PC-9 (cell line): ENCODE measurements at regions of chr12 and their contacts with region 1.

Region 1: DNA sequence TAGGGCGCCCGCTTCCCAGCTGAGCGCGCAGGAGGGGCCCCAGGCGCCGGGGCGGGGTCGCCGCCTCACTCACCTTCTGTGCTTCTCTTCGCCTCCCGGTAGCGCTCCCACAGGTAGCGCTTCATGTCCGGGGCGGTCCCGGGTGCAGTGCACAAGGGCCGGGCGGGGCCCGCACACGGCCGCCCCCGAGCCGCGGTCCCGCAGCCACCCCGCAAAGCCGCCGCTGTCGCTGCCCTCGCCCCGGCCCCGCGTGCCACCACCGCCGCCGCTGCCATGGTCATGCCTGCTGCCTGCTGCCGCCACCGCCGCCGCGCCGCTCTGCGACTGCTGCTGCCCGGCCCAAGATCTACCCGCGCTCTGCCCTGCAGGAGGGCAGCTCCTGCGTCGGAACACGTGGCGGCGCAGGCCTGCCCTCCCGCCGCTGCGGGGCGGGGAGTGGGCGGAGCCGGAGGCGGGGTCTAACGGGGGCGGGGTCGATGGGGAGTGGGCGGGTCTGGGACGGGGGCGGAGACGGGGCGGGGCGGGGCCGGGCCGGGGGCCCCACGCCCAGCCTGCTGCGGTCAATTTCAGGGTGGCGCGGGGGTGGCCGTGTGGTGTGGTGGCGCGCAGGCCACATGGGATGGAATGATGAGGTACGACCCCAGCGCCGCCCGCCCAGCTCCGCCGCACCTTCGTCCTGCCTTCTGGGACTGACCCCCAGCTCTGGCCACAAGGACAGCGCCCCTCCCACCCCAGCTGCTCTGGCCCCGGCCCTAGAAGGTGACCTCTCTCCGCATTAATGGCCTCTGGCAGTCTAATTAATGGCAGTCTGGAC is at the start of gene NT5DC3:
- DNase-seq: peak; percentile 71 to 84
- H3K4me3 ChIP-seq: peak within 1 kb of the TSS; percentile 85
- H3K27ac ChIP-seq: peak within 1 kb of the TSS; percentile 92
- H3K4me1 ChIP-seq: peaks cover 31% of the 10 kb centered on the region
- H3K27me3 ChIP-seq: no peaks in the 10 kb centered on the region
- CTCF ChIP-seq: no peak
- total RNA-seq, gene NT5DC3: 11.5 and 13.2 TPM in 2 replicates

Region 2: GRCh38 chr12:103742349-103742932 is 98.6 kb before region 1 on chr12:
- CTCF ChIA-PET with region 1: no interaction called
- POLR2A ChIA-PET with region 1: no interaction called
- intact Hi-C with region 1: loop called (anchors 2 kb)
- DNase-seq: peak; percentile 59 to 63
- H3K4me3 ChIP-seq: no peak overlapping the region
- H3K27ac ChIP-seq: no peak overlapping the region
- H3K4me1 ChIP-seq: peaks cover 9% of the 10 kb centered on the region
- H3K27me3 ChIP-seq: no peaks in the 10 kb centered on the region
- CTCF ChIP-seq: no peak

Region 3: GRCh38 chr12:103799870-103800771 is 41.0 kb before region 1 on chr12:
- CTCF ChIA-PET with region 1: no interaction called
- POLR2A ChIA-PET with region 1: interaction called, 3 read pairs
- intact Hi-C with region 1: loop called (anchors 1 kb)
- DNase-seq: peak; percentile 70 to 96
- H3K4me3 ChIP-seq: peak overlapping the region; percentile 29; the same call in 1 of the 2 replicates
- H3K27ac ChIP-seq: peak overlapping the region; percentile 87
- H3K4me1 ChIP-seq: peaks cover 72% of the 10 kb centered on the region
- H3K27me3 ChIP-seq: no peaks in the 10 kb centered on the region
- CTCF ChIP-seq: no peak

Region 4: DNA sequence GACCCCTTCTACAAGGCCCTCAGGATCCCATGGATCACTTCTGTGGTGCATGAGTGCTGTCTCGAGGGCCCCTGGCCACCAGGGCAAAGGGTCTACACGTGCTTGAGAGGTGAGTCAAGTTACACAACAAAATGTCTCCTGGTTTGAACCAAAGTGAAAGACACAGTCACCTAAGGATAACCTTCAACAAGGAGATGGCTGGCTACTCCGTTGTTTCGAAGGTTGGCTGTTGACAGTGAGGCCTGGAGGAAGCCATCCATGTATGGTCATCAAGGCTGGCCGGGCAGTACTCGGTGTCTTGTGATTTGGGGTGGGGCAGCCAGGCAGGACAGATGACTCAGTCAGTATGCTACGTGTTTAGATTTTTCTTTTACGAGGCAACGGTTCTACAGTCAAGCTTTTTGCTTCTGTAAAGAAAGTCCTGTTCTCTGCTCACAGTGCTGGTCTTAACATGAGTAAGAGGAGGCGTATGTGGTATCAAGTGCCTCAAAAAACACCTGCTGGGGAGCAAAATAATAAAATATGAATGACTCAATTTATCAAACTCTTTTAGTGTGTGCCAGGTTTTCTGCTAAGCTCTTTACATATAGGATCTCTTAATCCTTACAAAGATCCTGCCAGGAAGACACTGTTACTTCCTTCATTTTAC is 18.0 kb after region 1 on chr12:
- CTCF ChIA-PET with region 1: no interaction called
- POLR2A ChIA-PET with region 1: interaction called, 11 read pairs
- intact Hi-C with region 1: loop called (anchors 2 kb)
- DNase-seq: peak; percentile 73 to 96
- H3K4me3 ChIP-seq: peak overlapping the region; percentile 22; the same call in 1 of the 2 replicates
- H3K27ac ChIP-seq: peak overlapping the region; percentile 86
- H3K4me1 ChIP-seq: peaks cover 34% of the 10 kb centered on the region
- H3K27me3 ChIP-seq: no peaks in the 10 kb centered on the region
- CTCF ChIP-seq: no peak

Region 5: DNA sequence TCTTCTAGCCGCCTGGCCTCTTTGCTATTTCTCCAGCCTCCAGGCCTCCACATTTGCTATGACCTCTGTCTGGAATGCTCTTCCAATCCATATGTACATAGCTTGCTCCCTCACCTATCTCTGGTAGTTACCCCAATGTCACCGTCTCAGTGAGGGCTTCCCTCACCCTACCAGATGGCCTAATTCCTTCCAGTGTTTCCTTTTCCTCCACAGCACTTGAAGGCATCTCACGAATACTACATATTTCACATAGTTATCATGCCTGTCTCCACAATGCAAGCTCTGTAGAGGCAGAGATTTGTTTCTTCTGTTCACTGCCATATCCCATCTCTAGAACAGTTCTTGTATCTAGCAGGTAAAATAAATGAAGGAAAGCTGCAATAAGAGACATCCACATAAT is 67.8 kb after region 1 on chr12:
- CTCF ChIA-PET with region 1: no interaction called
- POLR2A ChIA-PET with region 1: no interaction called
- intact Hi-C with region 1: no loop called
- DNase-seq: no peak
- H3K4me3 ChIP-seq: no peak overlapping the region
- H3K27ac ChIP-seq: no peak overlapping the region
- H3K4me1 ChIP-seq: peaks cover 4% of the 10 kb centered on the region
- H3K27me3 ChIP-seq: peaks cover 10% of the 10 kb centered on the region; the same call in 1 of the 2 replicates
- CTCF ChIP-seq: no peak